ENCODE measurements at regions of chr20 and their contacts with region 1.

Region 1: GRCh38 chr20:58209652-58210397 is 18.6 kb downstream of the ANKRD60 start:
- DNase-seq: peak; percentile 78 to 80
- ATAC-seq: peak; percentile 78 to 90
- H3K4me3 ChIP-seq: no peak overlapping the region
- H3K27ac ChIP-seq: peak overlapping the region; percentile 19 to 77; a peak in 5 of 6 replicates
- H3K4me1 ChIP-seq: 0 out of 3 replicates have a peak, but pooled peaks cover 3% of the 10 kb centered on the region
- CTCF ChIP-seq: peak; percentile 100
- EP300 ChIP-seq: no peak
- POLR2A ChIP-seq: no peak
- RAD21 ChIP-seq: peak; percentile 99 to 100

Region 2: GRCh38 chr20:57526087-57526884 is 683.5 kb before region 1 on chr20:
- CTCF ChIA-PET with region 1: interaction called, 14 read pairs
- POLR2A ChIA-PET with region 1: no interaction called
- DNase-seq: peak in 1 of 2 experiments; percentile 42
- ATAC-seq: peak in 1 of 2 experiments; percentile 74; a peak in 3 of 6 replicates
- H3K4me3 ChIP-seq: no peak overlapping the region
- H3K27ac ChIP-seq: peak overlapping the region in 1 of 2 experiments; percentile 16; a peak in 1 of 6 replicates
- H3K4me1 ChIP-seq: peaks cover 6% of the 10 kb centered on the region; the same call in 1 of the 3 replicates
- CTCF ChIP-seq: peak; percentile 15; the same call in 1 of the 3 replicates
- EP300 ChIP-seq: no peak
- POLR2A ChIP-seq: no peak
- RAD21 ChIP-seq: no peak

Region 3: DNA sequence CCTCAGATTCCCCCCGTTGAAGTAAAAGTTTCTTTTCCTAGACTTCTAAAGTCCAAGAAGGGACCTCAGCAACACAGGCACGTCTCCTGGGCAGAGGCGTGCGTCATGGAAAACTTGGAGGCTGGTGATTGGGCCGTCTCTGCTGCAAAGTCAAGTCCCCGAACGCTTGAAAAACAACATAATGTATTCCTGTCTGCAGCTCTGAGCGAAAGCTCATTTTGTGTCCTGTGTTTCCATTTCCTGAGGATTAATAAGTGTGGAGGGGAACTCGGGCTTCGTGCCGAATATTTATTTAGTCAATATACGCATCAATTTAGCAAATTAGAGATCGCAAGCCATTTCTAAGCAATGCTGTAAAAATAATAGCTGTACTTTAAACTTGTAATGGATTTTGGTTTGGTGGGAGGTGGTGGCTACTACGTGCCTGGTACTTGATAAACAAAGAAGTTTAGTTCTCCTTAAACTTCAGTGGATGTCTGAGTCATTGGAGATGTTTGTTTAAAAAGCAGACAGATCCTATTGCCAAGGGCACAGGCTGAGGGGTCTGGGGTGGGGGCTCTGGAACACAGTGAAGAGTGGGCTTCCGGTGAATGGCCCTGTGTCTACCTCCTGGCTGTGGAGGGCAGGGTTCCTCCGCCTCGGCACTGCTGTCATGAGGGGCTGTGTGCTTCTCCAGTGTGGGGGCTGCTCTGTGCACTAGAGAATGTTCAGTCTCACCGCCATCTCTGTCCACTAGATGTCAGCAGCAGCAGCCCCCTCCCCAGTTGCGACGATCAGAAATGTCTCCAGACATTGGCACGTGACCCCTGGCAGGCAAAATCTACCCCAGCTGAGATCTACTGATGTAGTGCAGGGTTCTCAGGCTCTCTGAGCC is 627.2 kb before region 1 on chr20:
- CTCF ChIA-PET with region 1: interaction called, 17 read pairs
- POLR2A ChIA-PET with region 1: no interaction called
- DNase-seq: peak in 1 of 2 experiments; percentile 24
- ATAC-seq: peak; percentile 38 to 79; a peak in 4 of 6 replicates
- H3K4me3 ChIP-seq: peak overlapping the region; percentile 34; the same call in 2 of the 3 replicates
- H3K27ac ChIP-seq: peak overlapping the region; percentile 30 to 40; a peak in 3 of 6 replicates
- H3K4me1 ChIP-seq: peaks cover 14% of the 10 kb centered on the region
- CTCF ChIP-seq: peak; percentile 45
- EP300 ChIP-seq: no peak
- POLR2A ChIP-seq: no peak
- RAD21 ChIP-seq: peak in 1 of 2 experiments; percentile 17; a peak in 1 of 5 replicates

Region 4: GRCh38 chr20:57611586-57612311 is 598.1 kb before region 1 on chr20:
- CTCF ChIA-PET with region 1: interaction called, 37 read pairs
- POLR2A ChIA-PET with region 1: no interaction called
- DNase-seq: no peak
- ATAC-seq: no peak
- H3K4me3 ChIP-seq: no peak overlapping the region
- H3K27ac ChIP-seq: no peak overlapping the region
- H3K4me1 ChIP-seq: no peaks in the 10 kb centered on the region
- CTCF ChIP-seq: no peak
- EP300 ChIP-seq: no peak
- POLR2A ChIP-seq: no peak
- RAD21 ChIP-seq: no peak

Region 5: DNA sequence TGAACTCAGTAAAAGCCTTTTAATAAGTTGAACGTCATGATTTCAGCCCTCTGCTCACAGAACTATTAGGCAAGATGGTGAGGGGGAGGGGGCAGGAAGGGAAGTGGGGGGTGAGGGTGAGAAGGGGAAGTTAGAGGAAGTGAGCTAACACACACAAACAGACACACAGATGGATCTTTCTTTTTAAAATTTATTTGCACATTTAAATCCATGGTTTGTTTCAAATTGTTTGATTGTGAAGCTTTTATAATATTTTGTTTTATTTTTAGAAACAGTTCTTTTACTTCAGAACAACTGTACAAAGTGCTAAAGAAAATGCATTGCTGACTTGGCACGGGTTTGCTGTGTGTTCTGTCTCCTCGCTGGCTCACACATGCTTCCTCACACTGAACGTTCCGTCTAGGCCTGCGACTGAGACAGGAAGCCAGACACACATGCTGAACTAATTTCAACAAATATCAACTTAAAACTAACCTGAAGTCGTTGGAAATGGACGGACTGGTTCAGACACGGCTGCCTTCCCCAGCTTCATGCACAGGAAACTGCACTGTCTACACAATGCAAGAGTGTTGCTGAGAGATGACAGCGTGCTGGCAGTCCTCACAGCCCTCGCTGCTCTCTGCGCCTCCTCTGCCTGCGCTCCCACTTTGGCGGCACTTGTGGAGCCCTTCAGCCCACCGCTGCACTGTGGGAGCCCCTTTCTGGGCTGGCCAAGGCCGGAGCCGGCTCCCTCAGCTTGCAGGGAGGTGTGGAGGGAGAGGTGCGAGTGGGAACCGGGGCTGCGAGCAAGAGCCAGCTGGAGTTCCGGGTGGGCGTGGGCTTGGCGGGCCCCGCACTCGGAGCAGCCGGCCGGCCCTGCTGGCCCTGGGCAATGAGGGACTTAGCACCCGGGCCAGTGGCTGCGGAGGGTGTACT is 581.5 kb before region 1 on chr20:
- CTCF ChIA-PET with region 1: interaction called, 109 read pairs
- POLR2A ChIA-PET with region 1: no interaction called
- DNase-seq: no peak
- ATAC-seq: no peak
- H3K4me3 ChIP-seq: no peak overlapping the region
- H3K27ac ChIP-seq: peak overlapping the region in 1 of 2 experiments; percentile 30; a peak in 1 of 6 replicates
- H3K4me1 ChIP-seq: peaks cover 3% of the 10 kb centered on the region; the same call in 1 of the 3 replicates
- CTCF ChIP-seq: no peak
- EP300 ChIP-seq: no peak
- POLR2A ChIP-seq: no peak
- RAD21 ChIP-seq: no peak

Region 6: DNA sequence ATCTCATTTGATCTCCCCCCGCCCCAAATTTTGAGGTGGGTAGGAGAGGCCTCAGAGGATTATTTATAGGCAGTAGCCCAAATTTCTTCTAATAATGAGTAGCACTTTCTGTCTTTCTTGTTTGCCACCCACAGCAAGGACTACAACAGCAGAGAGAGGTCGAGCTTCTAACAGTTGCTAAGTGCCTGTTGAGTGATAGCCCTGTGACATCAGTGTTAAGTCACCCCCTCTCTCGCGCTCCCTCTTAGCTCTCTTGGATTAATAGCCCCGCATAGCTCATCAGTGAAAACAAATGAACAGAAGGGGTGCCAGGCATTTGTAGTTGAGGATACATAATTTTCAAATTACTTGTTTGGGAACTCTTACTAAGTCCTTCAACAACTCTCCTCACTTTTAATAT is 15.1 kb after region 1 on chr20:
- CTCF ChIA-PET with region 1: interaction called, 30 read pairs
- POLR2A ChIA-PET with region 1: no interaction called
- DNase-seq: no peak
- ATAC-seq: no peak
- H3K4me3 ChIP-seq: no peak overlapping the region
- H3K27ac ChIP-seq: no peak overlapping the region
- H3K4me1 ChIP-seq: no peaks in the 10 kb centered on the region
- CTCF ChIP-seq: no peak
- EP300 ChIP-seq: no peak
- POLR2A ChIP-seq: no peak
- RAD21 ChIP-seq: no peak